ENCODE measurements at regions of chr15 and their contacts with region 1.

Region 1: GRCh38 chr15:99961011-99961441 is 227.8 kb upstream of the LYSMD4 start:
- DNase-seq: peak in 2 of 3 donors; percentile 48 to 66
- ATAC-seq: peak; percentile 56 to 61
- H3K4me3 ChIP-seq: no peak overlapping the region
- H3K27ac ChIP-seq: no peak overlapping the region
- H3K4me1 ChIP-seq: no peaks in the 10 kb centered on the region
- H3K27me3 ChIP-seq: no peaks in the 10 kb centered on the region

Region 2: GRCh38 chr15:99704444-99704838 is 256.6 kb before region 1 on chr15:
- intact Hi-C with region 1: no loop called
- DNase-seq: no peak
- ATAC-seq: peak; percentile 71 to 77
- H3K4me3 ChIP-seq: no peak overlapping the region
- H3K27ac ChIP-seq: no peak overlapping the region
- H3K4me1 ChIP-seq: peaks cover 12% of the 10 kb centered on the region
- H3K27me3 ChIP-seq: no peaks in the 10 kb centered on the region

Region 3: GRCh38 chr15:100131321-100132224 is 170.5 kb after region 1 on chr15:
- intact Hi-C with region 1: loop called in 1 of 4 experiments (anchors 10 kb)
- DNase-seq: peak; percentile 80 to 91 (median 89)
- ATAC-seq: peak; percentile 89 to 91
- H3K4me3 ChIP-seq: peak overlapping the region; percentile 14
- H3K27ac ChIP-seq: peak overlapping the region; percentile 2
- H3K4me1 ChIP-seq: no peaks in the 10 kb centered on the region
- H3K27me3 ChIP-seq: no peaks in the 10 kb centered on the region

Region 4: GRCh38 chr15:100328796-100329195 is 367.8 kb after region 1 on chr15:
- intact Hi-C with region 1: loop called in 2 of 4 experiments (anchors 10 kb)
- DNase-seq: no peak
- ATAC-seq: no peak
- H3K4me3 ChIP-seq: no peak overlapping the region
- H3K27ac ChIP-seq: no peak overlapping the region
- H3K4me1 ChIP-seq: no peaks in the 10 kb centered on the region
- H3K27me3 ChIP-seq: no peaks in the 10 kb centered on the region

Measured in right cardiac atrium (tissue), 5 donors.